ENCODE measurements at regions of chr19 and their contacts with region 1.

Region 1: DNA sequence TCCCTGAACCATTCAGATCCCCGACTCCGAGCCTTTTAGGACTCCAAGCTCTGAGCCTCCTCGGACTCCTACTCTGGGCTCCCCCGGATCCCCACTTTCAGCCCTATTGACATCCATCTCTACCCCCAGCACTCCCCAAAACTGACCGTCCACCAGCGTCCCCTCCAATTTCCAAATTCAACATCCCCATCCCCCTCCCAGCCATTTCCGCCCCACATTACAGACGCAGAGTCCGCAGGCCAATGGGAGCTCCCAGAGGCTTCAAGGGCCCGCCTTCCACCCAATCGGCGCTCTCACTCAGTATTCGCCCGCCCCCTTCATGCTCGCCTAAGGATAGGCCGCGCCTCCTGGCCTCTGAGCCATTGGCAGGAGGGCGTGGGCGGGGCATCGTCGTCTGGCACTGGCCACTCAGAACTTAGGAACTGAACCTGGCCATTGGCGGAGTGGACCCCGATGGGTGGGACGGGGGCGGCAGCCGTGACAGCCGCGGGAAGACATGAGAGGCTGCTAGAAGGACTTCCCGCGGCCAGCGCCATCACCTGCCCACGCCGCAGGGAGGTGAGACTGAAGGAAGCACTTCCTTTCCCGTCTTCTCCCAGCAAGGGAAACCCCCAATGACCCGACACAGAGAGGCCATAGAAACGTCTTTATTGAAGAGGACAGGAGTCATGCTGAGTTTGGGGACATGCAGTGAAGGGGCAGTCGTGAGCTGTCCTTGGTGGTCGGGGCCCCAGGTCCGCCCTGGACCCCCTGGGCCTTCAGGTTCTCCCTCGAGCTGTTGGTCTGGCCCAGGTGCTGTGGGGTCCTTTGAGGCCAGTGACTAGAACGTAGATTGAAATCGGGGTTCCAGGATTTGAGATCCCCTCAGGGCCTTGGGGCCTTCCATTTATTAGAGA is at the start of gene ALKBH6:
- DNase-seq: peak; percentile 94 to 98 (median 97)
- ATAC-seq: peak; percentile 100
- H3K4me3 ChIP-seq: peak within 1 kb of the TSS; percentile 93
- H3K4me3 Mint-ChIP-seq: peak within 1 kb of the TSS; percentile 92 to 99 (median 95)
- H3K27ac ChIP-seq: peak within 1 kb of the TSS; percentile 86
- H3K27ac Mint-ChIP-seq: peak within 1 kb of the TSS; percentile 88 to 99 (median 94)
- H3K4me1 ChIP-seq: peaks cover 12 to 18% of the 10 kb centered on the region in 2 donors
- H3K4me1 Mint-ChIP-seq: peaks cover 36 to 53% (median 46%) of the 10 kb centered on the region in 7 donors
- H3K27me3 ChIP-seq: no peaks in the 10 kb centered on the region
- H3K27me3 Mint-ChIP-seq: no peaks in the 10 kb centered on the region
- total RNA-seq, gene ALKBH6: 32.6 to 60.6 (median 49.3) TPM

Region 2: DNA sequence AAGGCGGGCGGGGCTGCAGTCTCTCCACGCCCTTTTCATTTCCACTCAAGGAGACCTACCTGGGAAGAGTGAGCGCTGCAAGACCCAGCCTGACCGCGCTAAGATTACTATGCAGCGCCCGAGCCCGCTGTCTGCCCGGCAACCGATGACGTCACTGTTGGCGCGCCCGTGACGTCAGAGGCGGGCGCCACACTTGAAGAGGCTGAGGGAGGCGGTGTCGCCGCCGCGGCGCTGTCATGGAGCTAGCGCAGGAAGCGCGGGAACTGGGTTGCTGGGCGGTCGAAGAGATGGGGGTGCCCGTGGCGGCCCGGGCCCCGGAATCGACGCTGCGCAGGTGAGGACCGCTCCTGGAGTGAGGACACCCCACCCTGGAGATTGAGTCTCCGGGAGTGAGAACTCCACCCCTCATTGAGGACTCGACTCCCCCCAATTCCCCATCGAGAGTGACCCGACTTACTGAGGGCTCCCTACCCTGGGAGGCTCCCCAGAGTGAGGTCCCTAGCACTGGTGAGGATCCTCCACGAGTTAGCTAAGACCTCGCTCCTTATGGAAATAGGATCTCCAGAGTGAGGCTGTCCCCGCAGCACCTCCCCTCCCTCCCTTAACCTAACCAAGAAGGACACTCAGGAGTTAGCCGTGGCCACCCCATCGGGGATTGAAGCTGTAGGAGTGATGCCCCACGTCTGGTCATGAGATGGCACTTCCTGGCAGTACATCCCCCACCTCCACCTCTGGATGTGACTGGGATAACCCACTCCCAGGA is 401.5 kb before region 1 on chr19 and contains the start of gene HAUS5:
- CTCF ChIA-PET with region 1: no interaction called
- POLR2A ChIA-PET with region 1: no interaction called
- intact Hi-C with region 1: loop called in 1 of 2 experiments (anchors 1 kb)
- DNase-seq: peak; percentile 92 to 99 (median 95)
- ATAC-seq: peak; percentile 92
- H3K4me3 ChIP-seq: peak within 1 kb of the TSS; percentile 98
- H3K4me3 Mint-ChIP-seq: peak within 1 kb of the TSS; percentile 86 to 94 (median 89)
- H3K27ac ChIP-seq: peak within 1 kb of the TSS; percentile 86
- H3K27ac Mint-ChIP-seq: peak within 1 kb of the TSS; percentile 88 to 98 (median 94)
- H3K4me1 ChIP-seq: peaks cover 24 to 28% of the 10 kb centered on the region in 2 donors
- H3K4me1 Mint-ChIP-seq: peaks cover 4 to 50% (median 43%) of the 10 kb centered on the region in 7 donors
- H3K27me3 ChIP-seq: no peaks in the 10 kb centered on the region
- H3K27me3 Mint-ChIP-seq: peaks cover 0 to 2% (median 0%) of the 10 kb centered on the region in 5 donors
- total RNA-seq, gene HAUS5: 23.6 to 40.0 (median 28.4) TPM

Region 3: GRCh38 chr19:35775298-35776110 is 238.8 kb before region 1 on chr19 and contains the start of gene ARHGAP33:
- CTCF ChIA-PET with region 1: no interaction called
- POLR2A ChIA-PET with region 1: no interaction called
- intact Hi-C with region 1: loop called in 1 of 2 experiments (anchors 1 kb)
- DNase-seq: peak; percentile 96 to 99 (median 98)
- ATAC-seq: peak; percentile 100
- H3K4me3 ChIP-seq: peak within 1 kb of the TSS; percentile 56
- H3K4me3 Mint-ChIP-seq: peak within 1 kb of the TSS; percentile 77 to 94 (median 86)
- H3K27ac ChIP-seq: peak within 1 kb of the TSS; percentile 61
- H3K27ac Mint-ChIP-seq: peak within 1 kb of the TSS in 7 of 9 donors; percentile 12 to 88 (median 84)
- H3K4me1 ChIP-seq: peaks cover 0 to 6% of the 10 kb centered on the region in 2 donors
- H3K4me1 Mint-ChIP-seq: peaks cover 11 to 28% (median 18%) of the 10 kb centered on the region in 7 donors
- H3K27me3 ChIP-seq: no peaks in the 10 kb centered on the region
- H3K27me3 Mint-ChIP-seq: no peaks in the 10 kb centered on the region
- total RNA-seq, gene ARHGAP33: 15.3 to 55.5 (median 23.4) TPM

Region 4: GRCh38 chr19:35899547-35900214 is 114.6 kb before region 1 on chr19:
- CTCF ChIA-PET with region 1: no interaction called
- POLR2A ChIA-PET with region 1: no interaction called
- intact Hi-C with region 1: loop called in 1 of 2 experiments (anchors 1 kb)
- DNase-seq: peak; percentile 74 to 94 (median 87)
- ATAC-seq: peak; percentile 74
- H3K4me3 ChIP-seq: peak overlapping the region; percentile 94
- H3K4me3 Mint-ChIP-seq: peak overlapping the region; percentile 83 to 100 (median 95)
- H3K27ac ChIP-seq: peak overlapping the region; percentile 100
- H3K27ac Mint-ChIP-seq: peak overlapping the region; percentile 92 to 97 (median 96)
- H3K4me1 ChIP-seq: peaks cover 35 to 43% of the 10 kb centered on the region in 2 donors
- H3K4me1 Mint-ChIP-seq: peaks cover 34 to 65% (median 46%) of the 10 kb centered on the region in 7 donors
- H3K27me3 ChIP-seq: no peaks in the 10 kb centered on the region
- H3K27me3 Mint-ChIP-seq: no peaks in the 10 kb centered on the region

Region 5: GRCh38 chr19:35944553-35944952 is 69.7 kb before region 1 on chr19:
- CTCF ChIA-PET with region 1: no interaction called
- POLR2A ChIA-PET with region 1: no interaction called
- intact Hi-C with region 1: no loop called
- DNase-seq: no peak
- ATAC-seq: no peak
- H3K4me3 ChIP-seq: no peak overlapping the region
- H3K4me3 Mint-ChIP-seq: no peak overlapping the region
- H3K27ac ChIP-seq: no peak overlapping the region
- H3K27ac Mint-ChIP-seq: peak overlapping the region in 2 of 9 donors; percentile 29 to 74
- H3K4me1 ChIP-seq: peaks cover 5 to 9% of the 10 kb centered on the region in 2 donors
- H3K4me1 Mint-ChIP-seq: peaks cover 16 to 42% (median 34%) of the 10 kb centered on the region in 7 donors
- H3K27me3 ChIP-seq: no peaks in the 10 kb centered on the region
- H3K27me3 Mint-ChIP-seq: no peaks in the 10 kb centered on the region

Region 6: GRCh38 chr19:35977446-35978222 is 36.6 kb before region 1 on chr19:
- CTCF ChIA-PET with region 1: no interaction called
- POLR2A ChIA-PET with region 1: no interaction called
- intact Hi-C with region 1: no loop called
- DNase-seq: no peak
- ATAC-seq: peak; percentile 58
- H3K4me3 ChIP-seq: no peak overlapping the region
- H3K4me3 Mint-ChIP-seq: no peak overlapping the region
- H3K27ac ChIP-seq: no peak overlapping the region
- H3K27ac Mint-ChIP-seq: no peak overlapping the region
- H3K4me1 ChIP-seq: no peaks in the 10 kb centered on the region
- H3K4me1 Mint-ChIP-seq: no peaks in the 10 kb centered on the region
- H3K27me3 ChIP-seq: peaks cover 0 to 3% of the 10 kb centered on the region in 2 donors
- H3K27me3 Mint-ChIP-seq: peaks cover 8 to 36% (median 25%) of the 10 kb centered on the region in 5 donors

Region 7: GRCh38 chr19:35995048-35995993 is 19.0 kb before region 1 on chr19 and contains the start of gene SDHAF1:
- CTCF ChIA-PET with region 1: interaction called, 4 read pairs
- POLR2A ChIA-PET with region 1: interaction called, 9 read pairs
- intact Hi-C with region 1: loop called (anchors 1 kb)
- DNase-seq: peak; percentile 77 to 94 (median 87)
- ATAC-seq: peak; percentile 96
- H3K4me3 ChIP-seq: peak within 1 kb of the TSS; percentile 84
- H3K4me3 Mint-ChIP-seq: peak within 1 kb of the TSS; percentile 89 to 99 (median 96)
- H3K27ac ChIP-seq: peak within 1 kb of the TSS; percentile 74
- H3K27ac Mint-ChIP-seq: peak within 1 kb of the TSS; percentile 90 to 97 (median 95)
- H3K4me1 ChIP-seq: peaks cover 11 to 16% of the 10 kb centered on the region in 2 donors
- H3K4me1 Mint-ChIP-seq: peaks cover 22 to 44% (median 33%) of the 10 kb centered on the region in 7 donors
- H3K27me3 ChIP-seq: no peaks in the 10 kb centered on the region
- H3K27me3 Mint-ChIP-seq: no peaks in the 10 kb centered on the region
- total RNA-seq, gene SDHAF1: 7.8 to 26.1 (median 17.8) TPM

Region 8: DNA sequence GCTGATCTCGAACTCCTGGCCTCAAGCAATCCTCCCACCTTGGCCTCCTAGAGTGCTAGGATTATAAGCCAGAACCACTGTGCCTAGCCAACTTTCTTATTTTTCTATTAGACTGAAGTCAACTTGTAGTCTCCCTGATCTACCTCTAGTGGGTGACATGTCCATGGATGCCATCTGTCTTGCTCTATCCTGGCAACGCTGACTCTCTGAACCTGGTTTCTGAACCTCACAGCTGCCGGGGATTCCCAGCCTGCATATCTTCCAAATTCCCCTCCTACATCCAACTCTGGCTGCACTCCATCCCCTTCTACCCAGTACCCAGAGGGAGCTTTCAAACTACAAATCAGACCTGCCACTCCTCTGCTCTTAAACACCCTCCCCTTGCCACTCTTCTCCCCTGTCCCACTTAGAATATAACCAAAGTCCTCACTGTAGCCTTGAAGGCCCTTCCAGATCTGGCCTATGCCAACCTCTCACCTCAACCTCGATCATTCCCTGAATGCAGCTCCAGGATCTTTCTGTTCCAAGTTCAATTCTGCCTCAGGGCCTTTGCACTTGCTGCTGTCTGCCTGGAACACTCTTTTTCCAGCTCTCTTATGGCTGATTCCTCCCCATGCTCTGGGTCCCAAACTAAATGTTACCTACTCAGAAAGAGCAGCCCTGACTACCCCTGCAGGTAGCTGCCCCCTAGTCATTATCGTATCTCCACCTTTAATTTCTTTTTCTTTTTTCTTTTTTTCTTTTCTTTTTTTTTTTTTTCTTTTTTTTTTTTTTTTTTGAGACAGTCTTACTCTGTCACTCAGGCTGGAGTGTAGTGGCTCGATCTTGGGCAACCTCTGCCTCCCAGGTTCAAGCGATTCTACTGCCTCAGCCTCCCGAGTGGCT is 16.2 kb after region 1 on chr19:
- CTCF ChIA-PET with region 1: no interaction called
- POLR2A ChIA-PET with region 1: no interaction called
- intact Hi-C with region 1: no loop called
- DNase-seq: no peak
- ATAC-seq: no peak
- H3K4me3 ChIP-seq: no peak overlapping the region
- H3K4me3 Mint-ChIP-seq: no peak overlapping the region
- H3K27ac ChIP-seq: no peak overlapping the region
- H3K27ac Mint-ChIP-seq: peak overlapping the region in 1 of 9 donors; percentile 83
- H3K4me1 ChIP-seq: peaks cover 4% of the 10 kb centered on the region in 2 donors
- H3K4me1 Mint-ChIP-seq: peaks cover 10 to 31% (median 24%) of the 10 kb centered on the region in 7 donors
- H3K27me3 ChIP-seq: no peaks in the 10 kb centered on the region
- H3K27me3 Mint-ChIP-seq: peaks cover 0 to 4% (median 0%) of the 10 kb centered on the region in 5 donors

Region 9: DNA sequence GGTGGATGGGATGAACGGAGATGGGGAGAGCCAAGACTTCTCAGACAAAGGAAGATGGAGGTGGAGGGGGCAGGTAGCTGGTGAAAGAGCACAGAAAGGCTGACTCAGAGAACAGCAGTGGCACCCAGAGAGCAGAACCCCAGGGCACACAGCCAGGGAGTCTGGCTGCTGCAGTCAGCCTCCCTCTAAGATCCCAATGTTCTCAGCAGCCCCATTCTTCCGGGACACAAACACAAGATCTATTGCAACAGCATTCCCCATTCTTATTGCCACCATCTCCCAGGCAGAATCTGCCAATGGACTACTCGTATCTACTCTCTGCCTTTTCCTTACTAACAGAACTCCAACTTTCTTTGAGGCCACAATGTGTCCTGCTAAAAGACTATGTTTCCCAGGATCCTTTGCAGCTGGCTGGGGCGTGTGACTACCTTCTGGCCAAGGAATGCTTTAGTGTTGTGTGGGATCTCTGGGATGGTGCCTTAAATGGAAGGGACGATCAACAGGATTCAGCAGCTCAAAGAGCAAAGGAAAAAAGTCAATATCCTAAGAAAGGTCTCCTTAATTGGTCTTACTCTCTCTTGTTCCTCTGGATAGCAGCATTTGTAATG is 32.3 kb after region 1 on chr19:
- CTCF ChIA-PET with region 1: no interaction called
- POLR2A ChIA-PET with region 1: no interaction called
- intact Hi-C with region 1: no loop called
- DNase-seq: no peak
- ATAC-seq: no peak
- H3K4me3 ChIP-seq: no peak overlapping the region
- H3K4me3 Mint-ChIP-seq: no peak overlapping the region
- H3K27ac ChIP-seq: no peak overlapping the region
- H3K27ac Mint-ChIP-seq: no peak overlapping the region
- H3K4me1 ChIP-seq: no peaks in the 10 kb centered on the region
- H3K4me1 Mint-ChIP-seq: peaks cover 0 to 29% (median 11%) of the 10 kb centered on the region in 7 donors
- H3K27me3 ChIP-seq: no peaks in the 10 kb centered on the region
- H3K27me3 Mint-ChIP-seq: no peaks in the 10 kb centered on the region

Region 10: DNA sequence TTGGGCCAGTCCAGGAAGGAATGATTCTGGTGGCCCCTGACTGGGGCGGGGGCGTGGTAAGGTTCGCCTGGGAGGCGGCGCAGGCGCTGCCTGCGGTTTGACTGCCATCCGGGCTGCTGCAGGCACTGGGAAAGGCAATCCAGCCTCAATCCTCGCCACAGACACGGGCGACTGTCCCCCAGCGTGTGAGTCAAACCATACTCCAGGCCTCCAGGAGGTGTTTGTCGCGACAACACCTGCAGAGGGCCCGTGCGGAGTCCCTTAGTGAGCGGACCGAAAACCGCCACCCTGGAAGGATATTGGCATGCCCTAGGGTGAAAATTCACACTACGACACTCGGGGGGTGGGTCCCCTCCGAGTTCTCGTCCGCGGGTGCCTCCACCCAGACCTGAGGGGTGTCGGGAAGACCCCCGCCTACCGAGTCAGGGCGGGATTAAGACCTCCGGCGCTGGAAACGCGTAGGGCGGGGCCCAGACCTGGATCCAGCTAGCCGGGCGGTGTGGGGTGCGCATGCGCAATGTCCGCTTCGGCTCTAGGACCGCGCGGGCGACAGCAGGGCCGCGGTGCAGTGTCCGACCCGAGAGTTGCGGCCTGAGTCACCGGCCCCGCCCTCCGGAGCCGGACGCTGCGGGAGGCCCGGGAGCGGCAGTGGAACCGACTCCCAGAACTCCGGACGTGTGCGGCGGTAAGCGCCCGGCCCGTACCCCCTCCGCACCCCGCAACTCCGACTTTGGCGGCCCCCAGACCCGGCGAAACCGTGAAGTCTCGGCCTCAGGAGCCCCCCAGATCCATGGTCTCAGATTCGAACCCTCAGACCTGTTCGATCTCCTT is 125.4 kb after region 1 on chr19 and contains the start of gene CAPNS1:
- CTCF ChIA-PET with region 1: no interaction called
- POLR2A ChIA-PET with region 1: no interaction called
- intact Hi-C with region 1: loop called in 1 of 2 experiments (anchors 1 kb)
- DNase-seq: peak; percentile 82 to 95 (median 86)
- ATAC-seq: peak; percentile 83
- H3K4me3 ChIP-seq: peak within 1 kb of the TSS; percentile 99
- H3K4me3 Mint-ChIP-seq: peak within 1 kb of the TSS; percentile 91 to 98 (median 95)
- H3K27ac ChIP-seq: peak within 1 kb of the TSS; percentile 87
- H3K27ac Mint-ChIP-seq: peak within 1 kb of the TSS; percentile 85 to 97 (median 91)
- H3K4me1 ChIP-seq: peaks cover 6 to 9% of the 10 kb centered on the region in 2 donors
- H3K4me1 Mint-ChIP-seq: peaks cover 10 to 25% (median 15%) of the 10 kb centered on the region in 7 donors
- H3K27me3 ChIP-seq: no peaks in the 10 kb centered on the region
- H3K27me3 Mint-ChIP-seq: no peaks in the 10 kb centered on the region
- total RNA-seq, gene CAPNS1: 197 to 473 (median 207) TPM